Common myeloid progenitor, CD34-positive (primary cell): ENCODE measurements at regions of chr9 and their contacts with region 1.

Region 1: DNA sequence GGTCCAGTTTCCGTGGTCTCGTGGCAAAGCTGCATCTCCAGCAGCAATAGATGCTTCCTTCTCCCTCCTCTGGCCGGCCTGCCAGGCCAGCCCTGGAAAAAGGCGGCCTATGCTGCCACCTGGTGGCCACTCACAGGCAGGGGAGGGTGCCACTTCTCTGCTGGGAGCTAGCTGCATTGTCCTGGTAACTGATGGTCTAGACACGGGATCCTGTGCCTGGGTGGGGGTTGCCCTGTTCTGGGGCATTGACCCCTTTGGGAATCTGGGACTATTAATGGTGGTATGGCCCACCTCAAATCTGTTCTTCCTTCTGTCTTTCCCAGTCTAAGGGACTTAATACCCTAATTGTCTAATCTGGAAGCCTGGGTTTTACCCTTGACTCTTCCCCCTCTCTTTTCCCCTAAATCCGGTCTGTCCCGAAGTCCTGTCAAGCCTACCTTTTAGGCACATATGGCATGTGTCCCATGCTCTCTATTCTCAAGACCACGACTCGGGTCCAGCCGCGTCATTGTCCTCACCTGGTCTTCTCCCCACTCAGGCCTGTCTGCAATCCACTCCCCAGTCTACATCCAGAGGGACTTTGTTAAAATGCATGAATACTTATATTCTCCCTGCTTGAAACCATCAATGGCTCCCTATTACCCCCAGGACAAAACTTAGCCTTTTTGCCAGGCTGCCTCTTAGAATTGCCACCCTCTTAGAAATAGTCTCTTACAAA is 20.0 kb upstream of the PTGS1 start:
- DNase-seq: peak; percentile 71 to 84 (median 82)
- H3K4me3 ChIP-seq: no peak overlapping the region
- H3K27ac ChIP-seq: no peak overlapping the region
- H3K4me1 ChIP-seq: peaks cover 0 to 41% (median 30%) of the 10 kb centered on the region in 4 experiments
- H3K27me3 ChIP-seq: no peaks in the 10 kb centered on the region

Region 2: DNA sequence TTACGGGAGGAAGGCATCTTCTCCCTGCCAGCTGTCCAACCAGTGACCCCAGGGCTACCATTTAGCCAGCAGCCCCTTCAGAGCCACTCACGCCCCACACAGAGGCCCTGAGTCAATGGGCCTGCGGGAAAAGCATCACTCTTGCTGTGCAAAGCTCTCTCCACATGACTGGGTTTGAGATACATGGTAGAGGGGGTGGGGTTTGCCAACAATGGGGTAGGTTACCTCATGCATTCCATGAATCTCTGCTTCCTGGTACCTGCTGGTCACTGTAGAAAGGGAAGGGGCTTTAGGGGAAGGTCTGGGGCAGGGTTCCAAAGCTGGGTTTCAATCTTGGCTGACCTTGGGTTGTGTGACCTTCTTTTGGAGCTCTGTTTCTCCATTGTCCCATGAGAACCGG is 234.8 kb before region 1 on chr9:
- CTCF ChIA-PET with region 1: interaction called, 277 read pairs
- POLR2A ChIA-PET with region 1: no interaction called
- DNase-seq: no peak
- H3K4me3 ChIP-seq: no peak overlapping the region
- H3K27ac ChIP-seq: no peak overlapping the region
- H3K4me1 ChIP-seq: no peaks in the 10 kb centered on the region
- H3K27me3 ChIP-seq: peaks cover 0 to 3% (median 0%) of the 10 kb centered on the region in 5 experiments

Region 3: GRCh38 chr9:122264360-122265148 is 86.2 kb before region 1 on chr9 and contains the starts of genes MRRF and RBM18:
- CTCF ChIA-PET with region 1: interaction called, 20 read pairs
- POLR2A ChIA-PET with region 1: no interaction called
- DNase-seq: peak; percentile 91 to 96 (median 94)
- H3K4me3 ChIP-seq: peak within 1 kb of the TSS; percentile 61 to 99 (median 92)
- H3K27ac ChIP-seq: peak within 1 kb of the TSS; percentile 97 to 99
- H3K4me1 ChIP-seq: peaks cover 19 to 29% (median 25%) of the 10 kb centered on the region in 4 experiments
- H3K27me3 ChIP-seq: no peaks in the 10 kb centered on the region

Region 4: DNA sequence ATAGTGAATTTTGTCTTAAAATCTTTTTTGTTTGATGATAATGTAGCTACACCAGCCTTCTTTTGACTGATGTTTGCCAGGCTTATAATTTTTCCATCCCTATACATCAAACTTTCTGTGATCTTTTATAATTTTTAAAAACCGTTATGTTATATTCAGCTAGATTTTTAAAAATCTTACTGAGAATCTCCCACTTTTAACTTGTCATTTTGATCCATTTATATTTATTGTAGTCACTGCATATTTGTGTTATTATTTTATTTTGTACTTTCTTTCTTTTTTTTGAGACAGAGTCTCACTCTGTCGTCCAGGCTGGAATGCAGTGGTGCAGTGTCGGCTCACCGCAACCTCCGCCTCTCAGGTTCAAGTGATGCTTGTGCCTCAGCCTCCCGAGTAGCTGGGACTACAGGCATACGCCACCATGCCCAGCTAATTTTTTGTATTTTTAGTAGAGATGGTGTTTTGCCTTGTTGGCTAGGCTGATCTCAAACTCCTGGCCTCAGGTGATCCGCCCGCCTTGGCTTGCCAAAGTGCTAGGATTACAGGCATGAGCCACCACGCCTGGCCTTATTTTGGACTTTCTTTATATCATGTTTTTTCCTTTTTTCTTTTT is 73.4 kb before region 1 on chr9:
- CTCF ChIA-PET with region 1: no interaction called
- POLR2A ChIA-PET with region 1: no interaction called
- DNase-seq: no peak
- H3K4me3 ChIP-seq: no peak overlapping the region
- H3K27ac ChIP-seq: no peak overlapping the region
- H3K4me1 ChIP-seq: no peaks in the 10 kb centered on the region
- H3K27me3 ChIP-seq: no peaks in the 10 kb centered on the region

Region 5: GRCh38 chr9:122334916-122335315 is 15.9 kb before region 1 on chr9:
- CTCF ChIA-PET with region 1: interaction called, 27 read pairs
- POLR2A ChIA-PET with region 1: no interaction called
- DNase-seq: no peak
- H3K4me3 ChIP-seq: no peak overlapping the region
- H3K27ac ChIP-seq: no peak overlapping the region
- H3K4me1 ChIP-seq: peaks cover 0 to 31% (median 28%) of the 10 kb centered on the region in 4 experiments
- H3K27me3 ChIP-seq: no peaks in the 10 kb centered on the region

Region 6: GRCh38 chr9:122810306-122810946 is 459.6 kb after region 1 on chr9:
- CTCF ChIA-PET with region 1: interaction called, 10 read pairs
- POLR2A ChIA-PET with region 1: no interaction called
- DNase-seq: peak; percentile 79 to 91 (median 85)
- H3K4me3 ChIP-seq: no peak overlapping the region
- H3K27ac ChIP-seq: no peak overlapping the region
- H3K4me1 ChIP-seq: peaks cover 2 to 14% (median 7%) of the 10 kb centered on the region in 4 experiments
- H3K27me3 ChIP-seq: no peaks in the 10 kb centered on the region